Mammary epithelial cell (primary cell): ENCODE measurements at regions of chr22 and their contacts with region 1.

Region 1: GRCh38 chr22:25437414-25438160 is 126.9 kb upstream of the GRK3 start:
- DNase-seq: no peak
- H3K4me3 ChIP-seq: no peak overlapping the region
- H3K27ac ChIP-seq: no peak overlapping the region
- H3K4me1 ChIP-seq: no peaks in the 10 kb centered on the region
- H3K27me3 ChIP-seq: peaks cover 3% of the 10 kb centered on the region
- CTCF ChIP-seq: no peak

Region 2: DNA sequence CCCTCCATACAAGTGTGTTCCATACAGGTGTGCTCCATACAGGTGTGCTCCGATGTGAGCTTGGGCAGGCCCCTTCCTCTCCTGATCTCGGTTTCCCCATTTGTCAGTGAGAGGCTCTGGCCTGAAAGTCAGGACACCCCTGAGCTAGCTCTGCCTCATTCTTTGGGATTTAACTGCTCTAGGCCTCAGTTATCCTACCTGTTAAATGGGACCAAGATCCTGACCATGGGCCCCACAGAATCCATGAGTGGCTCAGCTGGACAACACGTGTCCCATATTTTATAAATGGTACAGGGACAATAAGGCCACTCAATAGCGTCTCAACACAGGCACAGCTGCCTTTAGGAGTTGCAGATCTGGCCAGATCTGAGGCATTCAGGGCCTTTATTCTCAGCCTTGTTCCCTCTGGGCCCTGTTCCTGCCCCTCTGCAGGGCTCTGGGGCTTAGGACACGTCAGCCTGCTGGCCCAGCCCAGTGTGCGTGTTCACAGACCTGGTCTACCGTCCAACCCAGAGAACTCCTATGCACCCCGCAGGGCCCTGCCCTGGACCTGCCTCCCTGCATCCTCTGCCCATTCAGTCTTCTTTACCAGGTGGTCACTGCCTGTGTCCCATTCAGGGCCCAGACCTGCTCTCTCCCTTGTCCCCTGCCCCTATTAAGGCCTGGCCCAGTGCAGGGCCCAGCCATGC is 1838.6 kb before region 1 on chr22:
- CTCF ChIA-PET with region 1: no interaction called
- dilution Hi-C with region 1: no loop called
- in situ Hi-C with region 1: loop called in 1 of 2 experiments (anchors 5 kb)
- intact Hi-C with region 1: no loop called
- DNase-seq: no peak
- H3K4me3 ChIP-seq: no peak overlapping the region
- H3K27ac ChIP-seq: no peak overlapping the region
- H3K4me1 ChIP-seq: no peaks in the 10 kb centered on the region
- H3K27me3 ChIP-seq: no peaks in the 10 kb centered on the region
- CTCF ChIP-seq: no peak